ENCODE measurements at regions of chr3 and their contacts with region 1.

Region 1: GRCh38 chr3:111668912-111669488 is 73.9 kb upstream of the ZBED2 start:
- DNase-seq: peak in 2 of 9 experiments; percentile 59 to 75
- ATAC-seq: peak; percentile 36
- H3K4me3 ChIP-seq: no peak overlapping the region
- H3K4me3 Mint-ChIP-seq: peak overlapping the region; percentile 16
- H3K27ac ChIP-seq: peak overlapping the region in 1 of 2 experiments; percentile 89
- H3K27ac Mint-ChIP-seq: peak overlapping the region; percentile 70
- H3K4me1 ChIP-seq: peaks cover 54% of the 10 kb centered on the region
- H3K4me1 Mint-ChIP-seq: peaks cover 78% of the 10 kb centered on the region
- H3K27me3 ChIP-seq: no peaks in the 10 kb centered on the region
- H3K27me3 Mint-ChIP-seq: no peaks in the 10 kb centered on the region
- CTCF ChIP-seq: peak; percentile 88

Region 2: GRCh38 chr3:110625201-110625747 is 1043.7 kb before region 1 on chr3:
- CTCF ChIA-PET with region 1: no interaction called
- POLR2A ChIA-PET with region 1: no interaction called
- intact Hi-C with region 1: no loop called
- DNase-seq: no peak
- ATAC-seq: no peak
- H3K4me3 ChIP-seq: no peak overlapping the region
- H3K4me3 Mint-ChIP-seq: no peak overlapping the region
- H3K27ac ChIP-seq: no peak overlapping the region
- H3K27ac Mint-ChIP-seq: no peak overlapping the region
- H3K4me1 ChIP-seq: peaks cover 8% of the 10 kb centered on the region
- H3K4me1 Mint-ChIP-seq: peaks cover 16% of the 10 kb centered on the region
- H3K27me3 ChIP-seq: no peaks in the 10 kb centered on the region
- H3K27me3 Mint-ChIP-seq: no peaks in the 10 kb centered on the region
- CTCF ChIP-seq: no peak

Region 3: GRCh38 chr3:111547631-111548030 is 121.4 kb before region 1 on chr3:
- CTCF ChIA-PET with region 1: no interaction called
- POLR2A ChIA-PET with region 1: interaction called, 9 read pairs
- intact Hi-C with region 1: loop called (anchors 2 to 5 kb)
- DNase-seq: peak in 7 of 9 experiments; percentile 26 to 86 (median 66)
- ATAC-seq: peak; percentile 76
- H3K4me3 ChIP-seq: peak overlapping the region; percentile 33 to 67
- H3K4me3 Mint-ChIP-seq: no peak overlapping the region
- H3K27ac ChIP-seq: peak overlapping the region; percentile 57 to 89
- H3K27ac Mint-ChIP-seq: no peak overlapping the region
- H3K4me1 ChIP-seq: peaks cover 82% of the 10 kb centered on the region
- H3K4me1 Mint-ChIP-seq: peaks cover 36% of the 10 kb centered on the region
- H3K27me3 ChIP-seq: no peaks in the 10 kb centered on the region
- H3K27me3 Mint-ChIP-seq: no peaks in the 10 kb centered on the region
- CTCF ChIP-seq: no peak

Region 4: DNA sequence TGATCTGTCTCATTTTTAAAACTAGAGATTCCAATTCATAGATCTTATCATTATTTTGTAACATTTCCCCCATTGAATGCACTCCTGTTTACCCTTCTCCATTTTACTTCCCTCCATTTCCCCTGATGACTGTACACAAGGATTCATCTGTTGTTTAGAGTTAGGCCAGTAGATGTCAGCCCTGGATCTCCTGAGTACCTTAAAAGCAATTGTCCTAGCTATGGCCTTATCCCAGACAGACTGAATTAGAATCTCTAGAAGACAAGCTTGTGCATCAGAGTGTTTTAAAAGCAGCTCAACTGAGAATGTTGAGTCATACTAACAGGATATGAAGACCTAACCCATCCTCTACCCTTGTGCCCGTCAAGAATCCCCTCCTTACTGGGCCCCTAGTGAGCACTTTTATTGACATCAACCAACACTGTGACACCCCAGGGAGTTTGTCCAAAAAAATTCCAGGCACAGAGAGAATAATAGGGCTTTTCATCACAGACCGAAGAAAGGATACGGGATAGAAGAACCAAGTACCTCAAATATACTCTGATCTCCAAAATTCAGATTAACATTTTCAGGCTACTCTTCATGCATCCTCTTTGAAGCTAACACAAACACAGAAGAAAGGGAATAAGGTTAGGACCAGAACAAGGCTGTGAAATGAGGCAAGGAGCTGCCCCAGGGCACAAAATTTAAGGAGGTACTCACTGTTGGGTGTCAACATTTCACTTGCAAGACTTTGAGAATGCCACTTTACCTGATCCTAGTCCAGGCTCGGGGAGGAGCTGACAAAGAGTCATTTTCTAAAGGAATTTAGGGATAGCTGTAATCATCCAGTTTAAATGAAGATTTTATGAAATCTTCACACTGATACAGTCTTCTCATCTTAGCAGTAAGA is 91.0 kb before region 1 on chr3:
- CTCF ChIA-PET with region 1: interaction called, 3 read pairs
- POLR2A ChIA-PET with region 1: no interaction called
- intact Hi-C with region 1: loop called in 1 of 2 experiments (anchors 10 kb)
- DNase-seq: peak in 2 of 9 experiments; percentile 51 to 68
- ATAC-seq: peak; percentile 90
- H3K4me3 ChIP-seq: no peak overlapping the region
- H3K4me3 Mint-ChIP-seq: no peak overlapping the region
- H3K27ac ChIP-seq: no peak overlapping the region
- H3K27ac Mint-ChIP-seq: peak overlapping the region; percentile 53
- H3K4me1 ChIP-seq: peaks cover 7% of the 10 kb centered on the region
- H3K4me1 Mint-ChIP-seq: peaks cover 75% of the 10 kb centered on the region
- H3K27me3 ChIP-seq: no peaks in the 10 kb centered on the region
- H3K27me3 Mint-ChIP-seq: no peaks in the 10 kb centered on the region
- CTCF ChIP-seq: no peak

Region 5: DNA sequence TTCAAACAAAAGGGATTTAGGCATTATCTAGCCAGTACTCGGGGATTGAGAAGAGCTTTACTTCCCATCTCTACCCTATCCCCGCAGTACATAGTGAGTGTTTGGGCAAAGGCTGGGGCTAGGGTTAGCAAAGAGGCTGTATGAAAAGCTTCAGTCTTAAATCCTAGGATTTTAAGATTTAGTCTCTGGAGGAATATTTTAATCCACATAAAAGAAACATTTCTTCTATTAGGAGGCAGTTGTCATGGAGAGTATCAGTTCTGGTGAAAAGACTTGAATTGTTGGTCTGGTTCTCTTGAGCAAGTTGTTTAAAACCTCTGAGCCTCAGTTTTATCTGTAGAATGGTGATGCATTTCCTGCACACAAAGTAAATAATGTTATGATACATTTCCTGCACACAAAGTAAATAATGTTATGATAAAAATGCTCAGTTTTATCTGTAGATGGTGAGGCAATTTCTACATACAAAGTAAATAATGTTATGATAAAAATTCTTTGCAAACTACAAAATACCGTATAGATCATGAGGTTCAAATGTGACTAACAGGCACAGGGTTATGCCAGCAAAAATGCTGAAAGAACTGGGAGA is 19.9 kb before region 1 on chr3:
- CTCF ChIA-PET with region 1: no interaction called
- POLR2A ChIA-PET with region 1: interaction called, 3 read pairs
- intact Hi-C with region 1: loop called in 1 of 2 experiments (anchors 2 kb)
- DNase-seq: no peak
- ATAC-seq: no peak
- H3K4me3 ChIP-seq: no peak overlapping the region
- H3K4me3 Mint-ChIP-seq: no peak overlapping the region
- H3K27ac ChIP-seq: no peak overlapping the region
- H3K27ac Mint-ChIP-seq: peak overlapping the region; percentile 33
- H3K4me1 ChIP-seq: no peaks in the 10 kb centered on the region
- H3K4me1 Mint-ChIP-seq: peaks cover 2% of the 10 kb centered on the region
- H3K27me3 ChIP-seq: no peaks in the 10 kb centered on the region
- H3K27me3 Mint-ChIP-seq: no peaks in the 10 kb centered on the region
- CTCF ChIP-seq: no peak

Region 6: DNA sequence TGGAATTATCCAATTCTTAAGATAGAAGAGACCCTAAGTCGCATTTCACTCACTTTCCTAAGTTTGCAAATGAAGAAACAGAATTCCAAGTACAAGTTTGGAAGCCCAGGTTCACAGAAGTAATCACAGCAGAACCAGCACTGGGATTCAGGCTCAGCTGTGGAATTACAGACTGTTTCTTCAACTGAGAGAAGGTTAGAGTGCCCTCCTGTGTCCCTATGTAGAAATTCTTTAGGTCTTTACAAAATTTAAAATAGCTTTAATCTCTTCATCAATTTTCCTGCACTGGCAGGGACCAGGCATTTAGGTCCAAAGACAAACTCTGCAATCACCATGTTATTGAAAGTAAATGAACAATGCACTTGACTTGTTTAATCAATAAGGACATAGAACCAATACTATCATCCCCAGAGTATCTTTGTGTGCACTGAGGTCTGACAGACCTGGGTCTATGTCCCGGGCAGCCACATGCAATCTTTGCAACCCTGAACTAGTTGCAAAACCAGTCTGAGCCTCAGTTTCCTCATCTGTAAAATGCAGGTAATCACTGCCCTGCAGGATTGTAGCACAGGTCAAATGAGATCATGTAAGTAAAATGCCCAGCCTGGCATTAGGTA is 22.4 kb after region 1 on chr3:
- CTCF ChIA-PET with region 1: interaction called, 14 read pairs
- POLR2A ChIA-PET with region 1: interaction called, 6 read pairs
- intact Hi-C with region 1: loop called (anchors 1 kb)
- DNase-seq: peak in 2 of 9 experiments; percentile 54 to 71
- ATAC-seq: peak; percentile 68
- H3K4me3 ChIP-seq: no peak overlapping the region
- H3K4me3 Mint-ChIP-seq: no peak overlapping the region
- H3K27ac ChIP-seq: no peak overlapping the region
- H3K27ac Mint-ChIP-seq: no peak overlapping the region
- H3K4me1 ChIP-seq: peaks cover 5% of the 10 kb centered on the region
- H3K4me1 Mint-ChIP-seq: peaks cover 68% of the 10 kb centered on the region
- H3K27me3 ChIP-seq: no peaks in the 10 kb centered on the region
- H3K27me3 Mint-ChIP-seq: no peaks in the 10 kb centered on the region
- CTCF ChIP-seq: peak; percentile 65

Region 7: DNA sequence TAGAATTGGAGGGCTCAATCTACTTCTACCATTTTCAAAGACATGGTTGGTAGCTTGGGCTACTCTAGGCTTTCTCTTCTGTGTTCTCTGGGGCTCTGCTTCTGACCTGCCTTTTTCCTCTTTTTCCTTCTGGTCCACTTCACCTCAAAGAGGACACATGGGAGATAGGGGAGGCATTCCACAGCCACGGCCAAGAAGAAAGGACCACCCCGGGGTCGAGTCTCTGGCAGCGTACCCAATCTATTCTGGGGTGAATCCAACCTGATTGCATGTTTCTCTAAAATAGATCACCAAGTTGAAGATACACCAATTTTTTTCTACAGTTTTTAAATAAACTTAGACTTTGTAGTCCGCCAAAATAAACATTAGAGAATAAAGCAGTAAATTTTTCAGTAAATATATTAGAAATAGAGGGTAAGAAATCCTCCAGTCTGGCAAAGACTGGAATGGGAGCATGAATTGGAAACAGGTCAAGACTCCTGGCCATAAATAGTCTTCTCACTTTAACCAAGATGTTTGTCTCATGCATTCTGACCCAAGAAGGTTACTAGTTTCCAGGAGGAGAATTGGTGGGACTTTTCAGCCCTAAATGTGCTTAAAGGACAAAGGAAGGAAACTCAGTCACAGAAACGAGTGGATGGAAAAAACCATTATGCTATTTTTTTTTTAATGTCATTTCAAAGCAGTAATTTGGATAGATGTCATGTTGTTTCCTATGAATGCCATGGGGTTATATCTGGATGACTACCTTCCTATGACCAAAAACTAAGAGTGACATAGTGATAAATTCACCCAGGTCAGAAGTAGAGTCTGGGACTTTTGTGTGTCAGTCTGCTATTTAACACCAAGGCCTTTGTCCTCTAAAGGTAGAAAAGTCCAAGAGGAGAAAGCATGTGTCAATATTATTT is 118.8 kb after region 1 on chr3:
- CTCF ChIA-PET with region 1: no interaction called
- POLR2A ChIA-PET with region 1: no interaction called
- intact Hi-C with region 1: no loop called
- DNase-seq: no peak
- ATAC-seq: no peak
- H3K4me3 ChIP-seq: no peak overlapping the region
- H3K4me3 Mint-ChIP-seq: no peak overlapping the region
- H3K27ac ChIP-seq: no peak overlapping the region
- H3K27ac Mint-ChIP-seq: no peak overlapping the region
- H3K4me1 ChIP-seq: no peaks in the 10 kb centered on the region
- H3K4me1 Mint-ChIP-seq: no peaks in the 10 kb centered on the region
- H3K27me3 ChIP-seq: no peaks in the 10 kb centered on the region
- H3K27me3 Mint-ChIP-seq: no peaks in the 10 kb centered on the region
- CTCF ChIP-seq: no peak

Region 8: GRCh38 chr3:111859974-111860859 is 191.2 kb after region 1 on chr3:
- CTCF ChIA-PET with region 1: interaction called, 3 read pairs
- POLR2A ChIA-PET with region 1: no interaction called
- intact Hi-C with region 1: loop called in 1 of 2 experiments (anchors 2 kb)
- DNase-seq: peak; percentile 10 to 86 (median 48)
- ATAC-seq: peak; percentile 39
- H3K4me3 ChIP-seq: peak overlapping the region; percentile 75 to 83
- H3K4me3 Mint-ChIP-seq: peak overlapping the region; percentile 95
- H3K27ac ChIP-seq: peak overlapping the region; percentile 40 to 76
- H3K27ac Mint-ChIP-seq: peak overlapping the region; percentile 85
- H3K4me1 ChIP-seq: peaks cover 8% of the 10 kb centered on the region
- H3K4me1 Mint-ChIP-seq: peaks cover 18% of the 10 kb centered on the region
- H3K27me3 ChIP-seq: no peaks in the 10 kb centered on the region
- H3K27me3 Mint-ChIP-seq: peaks cover 17% of the 10 kb centered on the region
- CTCF ChIP-seq: no peak

Region 9: GRCh38 chr3:112013058-112013783 is 344.2 kb after region 1 on chr3:
- CTCF ChIA-PET with region 1: interaction called, 16 read pairs
- POLR2A ChIA-PET with region 1: no interaction called
- intact Hi-C with region 1: no loop called
- DNase-seq: peak; percentile 9 to 72 (median 51)
- ATAC-seq: peak; percentile 79
- H3K4me3 ChIP-seq: no peak overlapping the region
- H3K4me3 Mint-ChIP-seq: no peak overlapping the region
- H3K27ac ChIP-seq: no peak overlapping the region
- H3K27ac Mint-ChIP-seq: no peak overlapping the region
- H3K4me1 ChIP-seq: peaks cover 2% of the 10 kb centered on the region
- H3K4me1 Mint-ChIP-seq: peaks cover 6% of the 10 kb centered on the region
- H3K27me3 ChIP-seq: no peaks in the 10 kb centered on the region
- H3K27me3 Mint-ChIP-seq: no peaks in the 10 kb centered on the region
- CTCF ChIP-seq: peak; percentile 69

Measured in CD8-positive, alpha-beta T cell (primary cell).